WTC11 (cell line): ENCODE measurements at regions of chr2 and their contacts with region 1.

Region 1: DNA sequence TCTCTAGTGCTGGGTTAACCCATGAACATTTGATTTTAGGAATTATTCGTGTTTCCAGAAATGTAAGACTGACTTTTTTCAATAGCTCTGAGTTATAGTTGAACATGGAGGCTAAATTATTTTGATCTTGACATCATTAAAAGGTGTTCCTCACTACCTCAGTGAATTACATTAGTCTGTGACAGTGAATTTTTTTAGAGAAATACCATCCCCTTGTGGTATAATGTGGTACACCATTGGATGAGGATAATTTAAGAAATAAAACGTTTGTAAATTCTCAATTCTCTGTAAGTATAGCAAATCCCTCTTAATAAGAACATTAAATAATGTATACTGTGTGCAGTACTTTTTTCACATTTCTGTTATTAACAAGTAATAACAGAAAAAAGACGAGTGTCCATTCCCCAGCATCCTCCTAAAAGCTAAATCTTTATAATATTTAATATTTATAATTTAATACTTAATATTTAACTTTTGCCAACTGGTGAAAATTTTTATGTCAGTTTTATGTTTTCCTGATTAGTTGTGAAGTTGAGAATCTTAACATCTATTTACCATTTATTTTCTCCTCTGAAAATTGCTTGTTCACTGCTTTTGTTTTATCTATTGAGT is 70.3 kb upstream of the CWC22 start:
- DNase-seq: no peak
- ATAC-seq: peak; percentile 92
- H3K4me3 Mint-ChIP-seq: no peak overlapping the region
- H3K27ac Mint-ChIP-seq: 0 out of 2 replicates have a peak overlapping the region, but pooled peaks have one; percentile 57
- H3K4me1 Mint-ChIP-seq: peaks cover 19% of the 10 kb centered on the region
- H3K27me3 Mint-ChIP-seq: no peaks in the 10 kb centered on the region
- CTCF ChIP-seq: peak; percentile 87

Region 2: GRCh38 chr2:180056367-180057118 is 20.9 kb before region 1 on chr2:
- CTCF ChIA-PET with region 1: interaction called, 10 read pairs
- POLR2A ChIA-PET with region 1: interaction called, 3 read pairs
- DNase-seq: peak; percentile 68
- ATAC-seq: peak; percentile 91
- H3K4me3 Mint-ChIP-seq: peak overlapping the region; percentile 45
- H3K27ac Mint-ChIP-seq: peak overlapping the region; percentile 98
- H3K4me1 Mint-ChIP-seq: peaks cover 58% of the 10 kb centered on the region
- H3K27me3 Mint-ChIP-seq: no peaks in the 10 kb centered on the region
- CTCF ChIP-seq: no peak

Region 3: GRCh38 chr2:180110469-180110868 is 33.1 kb after region 1 on chr2:
- CTCF ChIA-PET with region 1: no interaction called
- POLR2A ChIA-PET with region 1: no interaction called
- DNase-seq: no peak
- ATAC-seq: no peak
- H3K4me3 Mint-ChIP-seq: no peak overlapping the region
- H3K27ac Mint-ChIP-seq: no peak overlapping the region
- H3K4me1 Mint-ChIP-seq: 0 out of 2 replicates have a peak, but pooled peaks cover 6% of the 10 kb centered on the region
- H3K27me3 Mint-ChIP-seq: no peaks in the 10 kb centered on the region
- CTCF ChIP-seq: no peak

Region 4: DNA sequence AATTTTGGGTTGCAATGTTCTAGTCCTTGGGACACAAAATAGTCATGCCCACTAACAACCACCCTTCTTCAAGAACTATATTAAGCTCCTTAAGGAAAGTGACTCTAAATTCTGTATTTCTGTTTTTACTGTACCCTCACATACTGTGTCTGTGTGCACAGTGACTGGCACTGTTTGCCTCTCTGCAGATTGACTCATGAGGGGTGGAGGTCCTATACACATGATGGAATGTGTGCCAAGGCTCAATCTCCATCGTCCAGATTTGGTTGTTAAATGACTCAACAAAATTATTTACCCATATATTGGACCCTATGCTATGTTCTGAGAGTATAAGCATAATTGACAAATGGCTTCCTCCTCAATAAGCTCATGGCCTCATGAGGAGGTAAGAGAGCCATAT is 56.3 kb after region 1 on chr2:
- CTCF ChIA-PET with region 1: no interaction called
- POLR2A ChIA-PET with region 1: no interaction called
- DNase-seq: no peak
- ATAC-seq: no peak
- H3K4me3 Mint-ChIP-seq: no peak overlapping the region
- H3K27ac Mint-ChIP-seq: no peak overlapping the region
- H3K4me1 Mint-ChIP-seq: peaks cover 20% of the 10 kb centered on the region
- H3K27me3 Mint-ChIP-seq: no peaks in the 10 kb centered on the region; the same call in 1 of the 2 replicates
- CTCF ChIP-seq: no peak